Breast epithelium (tissue), 4 donors: ENCODE measurements at regions of chr1 and their contacts with region 1.

Region 1: DNA sequence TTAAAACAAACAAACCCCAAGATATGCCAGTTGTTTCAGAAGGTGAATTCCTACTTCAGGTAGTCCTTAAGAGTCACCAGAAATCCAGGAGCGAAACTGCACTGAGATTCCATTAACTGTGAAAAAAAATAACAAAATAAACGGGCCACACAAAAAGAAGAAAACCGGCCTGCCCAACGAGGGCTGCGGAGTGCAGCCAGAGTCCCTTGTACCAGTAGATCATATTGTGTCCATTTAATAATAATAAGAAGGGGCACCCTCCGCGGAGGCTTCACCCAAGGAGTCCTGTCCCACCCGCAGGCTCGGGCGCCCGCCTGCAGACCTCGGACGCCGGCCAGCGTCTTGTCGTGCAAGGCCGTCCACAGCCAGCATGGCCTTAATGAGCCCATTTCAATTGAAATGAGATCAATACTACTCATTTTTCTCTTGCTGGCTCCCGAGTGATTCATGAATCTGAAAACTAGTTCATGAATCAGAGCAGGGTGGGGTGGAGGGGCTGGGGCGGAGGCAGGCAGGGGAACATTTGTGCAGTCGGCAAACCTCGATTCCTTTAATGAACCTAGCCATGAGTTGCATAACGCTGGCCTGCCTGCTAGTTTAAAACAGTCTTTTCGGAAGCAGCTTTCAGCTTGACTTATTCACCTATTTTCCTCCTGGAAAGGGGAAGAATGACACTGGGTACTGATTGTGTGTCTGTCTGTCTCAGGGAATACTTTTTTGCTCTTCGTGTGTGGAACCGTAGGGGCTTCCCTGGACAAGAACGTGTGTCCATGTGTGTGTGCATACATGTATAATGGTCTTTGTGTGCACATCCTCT is 113.1 kb upstream of the IRF2BP2 start:
- DNase-seq: peak; percentile 66 to 78
- H3K4me3 ChIP-seq: peak overlapping the region in 2 of 3 donors; percentile 10 to 32
- H3K27ac ChIP-seq: peak overlapping the region; percentile 98 to 99
- H3K4me1 ChIP-seq: peaks cover 35 to 50% of the 10 kb centered on the region in 2 donors
- H3K27me3 ChIP-seq: no peaks in the 10 kb centered on the region
- CTCF ChIP-seq: peak in 2 of 3 donors; percentile 8 to 12
- POLR2A ChIP-seq: no peak

Region 2: GRCh38 chr1:234608025-234608862 is 114.9 kb before region 1 on chr1:
- intact Hi-C with region 1: loop called (anchors 2 kb)
- DNase-seq: peak; percentile 79 to 91
- H3K4me3 ChIP-seq: peak overlapping the region; percentile 77 to 90 (median 80)
- H3K27ac ChIP-seq: peak overlapping the region; percentile 98 to 99
- H3K4me1 ChIP-seq: peaks cover 5 to 10% of the 10 kb centered on the region in 2 donors
- H3K27me3 ChIP-seq: no peaks in the 10 kb centered on the region
- CTCF ChIP-seq: peak in 1 of 3 donors; percentile 38
- POLR2A ChIP-seq: no peak

Region 3: DNA sequence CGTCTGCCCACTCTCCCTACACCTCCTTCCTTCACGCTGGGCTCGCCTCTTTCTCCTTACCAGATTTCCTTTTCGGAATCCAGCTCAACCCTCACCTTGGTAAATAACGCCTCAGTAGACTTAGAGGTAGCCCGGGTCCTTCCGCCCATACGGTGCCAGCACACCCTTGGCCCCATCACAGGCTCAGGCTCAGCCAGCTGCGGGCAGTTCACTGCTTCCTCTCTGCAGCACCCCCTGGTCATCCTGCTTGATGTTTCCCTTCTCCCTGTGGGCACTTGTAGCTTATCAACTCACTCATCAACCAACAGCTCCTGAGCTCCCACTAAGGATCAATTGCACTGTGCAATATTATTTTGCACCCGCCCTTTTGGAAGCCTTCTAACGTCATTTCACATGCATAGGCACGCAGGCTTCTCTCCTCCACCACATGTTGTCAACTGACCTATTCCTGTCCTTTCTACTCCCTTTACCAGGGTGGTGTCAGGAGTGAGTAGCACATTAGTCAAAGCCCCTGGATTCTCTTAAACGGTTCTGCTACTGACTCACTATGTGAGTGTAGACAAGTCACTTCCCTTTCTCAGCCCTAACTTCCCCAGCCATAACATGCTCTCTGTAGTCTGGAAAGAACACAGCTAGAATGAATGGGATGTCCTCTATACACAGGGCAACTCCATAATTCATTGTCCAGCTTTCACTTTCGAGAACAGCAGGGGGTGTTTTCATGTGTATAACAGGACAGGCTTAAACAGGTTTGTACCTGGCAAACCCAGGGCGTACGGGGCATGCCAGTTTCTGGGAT is 66.1 kb before region 1 on chr1:
- intact Hi-C with region 1: no loop called
- DNase-seq: peak in 1 of 2 donors; percentile 59
- H3K4me3 ChIP-seq: no peak overlapping the region
- H3K27ac ChIP-seq: peak overlapping the region; percentile 78 to 80
- H3K4me1 ChIP-seq: peaks cover 0 to 20% of the 10 kb centered on the region in 2 donors
- H3K27me3 ChIP-seq: no peaks in the 10 kb centered on the region
- CTCF ChIP-seq: no peak
- POLR2A ChIP-seq: no peak

Region 4: DNA sequence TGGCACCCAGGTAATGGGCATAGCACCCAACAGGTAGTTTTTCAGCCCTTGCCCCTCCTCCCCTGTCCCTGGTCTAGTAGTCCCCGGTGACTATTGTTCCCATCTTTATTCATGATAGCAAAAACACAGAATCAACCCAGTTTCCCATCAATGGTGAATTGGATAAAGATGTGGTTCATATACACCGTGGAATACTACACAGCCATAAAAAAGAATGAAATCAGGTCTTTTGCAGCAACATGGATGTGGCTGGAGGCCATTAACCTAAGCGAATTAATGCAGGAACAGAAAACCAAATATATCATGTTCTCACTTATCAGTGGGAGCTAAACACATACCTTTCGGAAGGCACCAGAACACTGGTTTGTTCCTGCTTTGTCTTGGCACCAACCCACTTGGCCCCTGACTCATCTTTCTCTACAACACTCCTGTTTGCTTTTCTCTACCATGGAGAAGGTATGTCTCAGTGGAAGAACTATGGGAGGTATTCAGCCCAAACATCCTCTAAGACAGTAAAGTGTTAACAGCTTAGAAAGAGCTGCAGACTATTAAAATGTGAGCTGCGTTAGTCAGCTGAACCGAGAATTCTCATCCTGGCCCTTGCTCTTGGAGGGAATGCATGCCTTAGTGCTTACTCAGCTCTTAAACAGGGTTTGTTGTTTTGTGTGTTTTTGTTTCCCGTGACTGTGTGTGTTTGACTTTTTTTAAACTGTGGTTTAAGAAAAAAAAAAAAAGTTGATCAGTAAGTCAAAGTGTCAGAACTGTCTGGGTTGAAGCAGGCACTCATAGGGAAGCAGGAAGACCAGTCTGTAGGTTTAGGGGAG is 202.5 kb after region 1 on chr1:
- intact Hi-C with region 1: loop called (anchors 10 kb)
- DNase-seq: peak in 1 of 2 donors; percentile 19
- H3K4me3 ChIP-seq: no peak overlapping the region
- H3K27ac ChIP-seq: peak overlapping the region; percentile 64 to 77
- H3K4me1 ChIP-seq: peaks cover 0 to 12% of the 10 kb centered on the region in 2 donors
- H3K27me3 ChIP-seq: no peaks in the 10 kb centered on the region
- CTCF ChIP-seq: no peak
- POLR2A ChIP-seq: no peak

Region 5: GRCh38 chr1:235067263-235068172 is 344.4 kb after region 1 on chr1:
- intact Hi-C with region 1: loop called (anchors 1 kb)
- DNase-seq: peak; percentile 93 to 98
- H3K4me3 ChIP-seq: peak overlapping the region in 1 of 3 donors; percentile 42
- H3K27ac ChIP-seq: peak overlapping the region; percentile 96 to 98
- H3K4me1 ChIP-seq: peaks cover 6 to 15% of the 10 kb centered on the region in 2 donors
- H3K27me3 ChIP-seq: no peaks in the 10 kb centered on the region
- CTCF ChIP-seq: no peak
- POLR2A ChIP-seq: no peak